Ascending aorta (tissue), 2 donors: ENCODE measurements at regions of chr11 and their contacts with region 1.

Region 1: DNA sequence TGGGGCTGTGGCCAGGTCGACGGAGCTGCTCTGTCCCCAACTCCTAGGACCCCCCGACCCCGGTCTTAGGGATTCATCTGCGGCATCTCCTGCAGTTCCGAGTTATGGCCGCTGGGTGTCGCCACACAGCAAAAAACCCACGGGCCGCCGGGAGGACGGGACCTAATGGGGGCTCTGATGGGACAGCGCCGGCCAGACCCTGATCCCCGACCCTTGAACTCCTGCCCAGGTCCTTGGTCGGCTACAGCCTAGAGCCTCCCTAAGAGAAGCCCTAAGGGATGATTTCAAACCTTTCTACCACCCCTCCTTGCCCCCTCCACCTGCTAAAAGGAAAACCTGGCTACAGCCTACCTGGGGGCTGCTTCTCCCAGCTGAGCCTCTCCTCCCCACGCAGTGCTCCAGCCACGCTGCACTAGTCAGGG is 30.8 kb upstream of the LRRC10B start:
- DNase-seq: no peak
- H3K4me3 ChIP-seq: no peak overlapping the region
- H3K27ac ChIP-seq: no peak overlapping the region
- H3K4me1 ChIP-seq: peaks cover 0 to 6% of the 10 kb centered on the region in 2 donors
- H3K27me3 ChIP-seq: no peaks in the 10 kb centered on the region
- CTCF ChIP-seq: peak; percentile 82 to 96 (median 95)

Region 2: DNA sequence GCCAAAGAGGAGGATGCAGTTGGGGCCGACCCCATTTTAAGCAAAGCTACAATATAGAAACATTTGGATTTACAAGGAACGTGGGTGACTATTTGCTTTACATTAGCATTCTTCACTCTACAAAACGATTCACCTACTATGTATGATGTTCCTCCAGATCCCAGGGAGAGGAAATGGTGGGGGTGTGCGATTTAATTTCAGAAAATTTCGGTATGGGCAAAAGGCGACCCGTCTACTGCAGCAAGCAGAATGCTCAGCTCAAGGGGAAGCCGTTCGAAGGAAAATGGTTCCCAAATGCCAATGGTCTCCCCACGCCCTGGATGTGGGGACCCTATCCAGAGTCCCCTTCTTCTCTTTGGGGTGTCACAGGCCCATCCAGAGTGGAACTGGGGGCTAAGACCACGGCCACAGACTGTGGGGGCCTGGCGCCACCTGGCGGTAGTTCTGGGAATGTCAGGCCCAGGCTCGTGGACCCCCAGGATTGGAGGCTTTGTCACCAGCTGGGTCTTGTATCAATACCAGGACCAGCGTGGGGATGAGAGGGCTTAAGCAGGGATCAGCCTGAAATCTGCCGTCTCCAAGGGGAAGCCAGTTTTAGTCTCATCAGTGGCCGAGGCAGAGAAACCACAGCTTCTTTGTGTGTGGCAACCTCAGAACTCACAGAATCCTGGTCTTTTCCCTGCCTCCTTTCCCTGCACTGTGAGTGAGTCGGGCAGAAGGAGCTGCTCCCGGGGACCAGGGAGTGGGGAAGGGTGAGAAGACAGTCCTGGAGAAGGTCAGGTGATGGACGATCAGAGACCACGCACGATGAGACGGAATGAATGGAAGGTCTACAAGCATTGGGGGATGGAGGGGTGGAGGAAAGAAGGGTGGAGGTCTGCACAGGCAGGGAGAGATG is 39.2 kb after region 1 on chr11:
- intact Hi-C with region 1: loop called (anchors 1 kb)
- DNase-seq: peak in 1 of 2 donors; percentile 72
- H3K4me3 ChIP-seq: peak overlapping the region in 1 of 2 donors; percentile 11
- H3K27ac ChIP-seq: no peak overlapping the region
- H3K4me1 ChIP-seq: no peaks in the 10 kb centered on the region
- H3K27me3 ChIP-seq: peaks cover 3% of the 10 kb centered on the region
- CTCF ChIP-seq: peak; percentile 92 to 99 (median 98)

Region 3: DNA sequence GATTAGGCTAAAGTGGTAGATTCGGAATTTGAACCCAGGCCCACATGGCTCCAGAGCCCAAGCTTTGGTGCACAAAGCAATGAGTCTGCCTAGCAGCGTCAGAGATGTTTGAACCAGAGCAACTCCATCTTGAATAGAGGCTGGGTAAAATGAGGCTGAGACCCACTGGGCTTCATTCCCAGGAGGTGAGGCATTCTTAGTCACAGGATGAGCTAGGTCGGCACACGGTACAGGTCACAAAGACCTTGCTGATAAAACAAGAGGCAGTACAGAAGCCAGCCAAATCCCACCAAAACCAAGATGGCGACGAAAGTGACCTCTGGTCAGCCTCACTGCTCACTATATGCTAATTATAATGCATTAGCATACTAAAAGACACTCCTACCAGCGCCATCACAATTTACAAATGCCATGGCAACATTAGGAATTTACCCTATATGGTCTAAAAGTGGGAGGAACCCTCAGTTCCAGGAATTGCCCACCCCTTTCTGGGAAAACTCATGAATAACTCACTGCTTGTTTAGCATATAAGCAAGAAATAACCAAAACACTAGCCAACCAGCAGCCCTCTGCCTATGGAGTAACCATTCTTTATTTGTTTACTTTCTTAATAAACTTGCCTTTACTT is 162.2 kb after region 1 on chr11:
- intact Hi-C with region 1: loop called (anchors 2 kb)
- DNase-seq: no peak
- H3K4me3 ChIP-seq: no peak overlapping the region
- H3K27ac ChIP-seq: no peak overlapping the region
- H3K4me1 ChIP-seq: no peaks in the 10 kb centered on the region
- H3K27me3 ChIP-seq: no peaks in the 10 kb centered on the region
- CTCF ChIP-seq: no peak

Region 4: DNA sequence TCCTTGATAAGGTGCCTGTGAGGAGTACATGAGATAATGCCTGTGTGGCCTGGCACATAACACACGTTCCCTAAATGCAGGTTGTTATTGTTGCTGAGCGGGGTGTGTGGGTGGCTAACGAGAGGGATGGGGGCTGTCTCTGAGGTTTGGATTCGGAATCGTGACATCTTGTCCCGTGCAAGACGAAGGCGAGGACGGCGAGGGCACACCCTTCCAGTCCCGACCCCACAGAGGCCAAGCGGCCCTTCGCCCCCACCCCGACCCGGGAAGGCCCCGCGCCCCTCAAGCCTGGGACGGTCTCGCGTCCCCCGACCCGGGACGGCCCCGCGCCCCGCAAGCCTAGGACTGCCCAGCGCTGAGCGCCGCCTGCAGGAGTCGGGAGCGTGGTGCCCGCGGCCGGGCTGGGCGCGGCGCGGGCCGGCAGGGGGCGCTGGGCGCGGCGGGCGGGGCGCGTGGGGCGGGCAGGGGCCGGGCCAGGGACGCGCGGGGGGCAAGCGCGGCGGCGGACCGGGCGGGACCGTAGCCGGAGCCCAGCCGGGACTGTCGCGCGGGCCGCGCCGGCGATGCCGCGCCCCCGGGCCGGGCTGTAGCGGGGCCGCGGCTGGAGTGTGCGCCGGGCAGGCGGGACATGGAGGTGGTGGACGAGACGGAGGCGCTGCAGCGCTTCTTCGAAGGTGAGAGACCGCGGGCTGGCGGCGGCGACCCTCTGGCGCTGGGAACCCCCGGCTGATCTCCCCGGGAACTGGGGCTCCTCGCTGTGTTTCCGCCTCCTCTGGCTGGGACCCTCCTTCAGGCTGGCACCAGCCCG is 274.6 kb after region 1 on chr11 and contains the start of gene MYRF:
- intact Hi-C with region 1: no loop called
- DNase-seq: no peak
- H3K4me3 ChIP-seq: peak within 1 kb of the TSS; percentile 53 to 63
- H3K27ac ChIP-seq: no peak within 1 kb of the TSS
- H3K4me1 ChIP-seq: peaks cover 3 to 8% of the 10 kb centered on the region in 2 donors
- H3K27me3 ChIP-seq: no peaks in the 10 kb centered on the region
- CTCF ChIP-seq: peak; percentile 30 to 55 (median 40)
- total RNA-seq, gene MYRF: not detected